B cell (primary cell): ENCODE measurements at regions of chr1 and their contacts with region 1.

Region 1: DNA sequence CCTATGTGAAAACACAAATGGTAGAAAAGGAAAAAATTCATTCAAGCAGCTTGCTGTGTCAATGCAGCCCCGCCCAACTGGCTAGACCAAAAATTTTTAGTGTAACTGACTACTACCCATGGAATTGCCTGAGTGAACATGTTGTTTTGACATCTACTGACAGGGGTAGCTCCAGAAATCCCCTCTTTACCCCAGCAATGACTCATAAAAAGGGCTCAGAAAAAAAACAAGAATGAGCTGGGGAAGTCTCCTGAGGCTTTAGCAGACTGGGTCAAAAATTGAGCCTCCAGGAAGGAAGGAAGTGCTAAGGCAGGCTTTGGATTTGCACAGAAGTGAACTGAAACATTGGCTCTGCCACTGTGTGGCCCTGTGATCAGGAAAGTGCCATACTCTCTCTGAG is 24.4 kb upstream of the FGGY start:
- DNase-seq: peak; percentile 66
- ATAC-seq: peak; percentile 91
- H3K4me3 ChIP-seq: no peak overlapping the region
- H3K4me3 Mint-ChIP-seq: peak overlapping the region; percentile 20
- H3K27ac ChIP-seq: no peak overlapping the region
- H3K27ac Mint-ChIP-seq: peak overlapping the region; percentile 88
- H3K4me1 ChIP-seq: peaks cover 13 to 21% of the 10 kb centered on the region in 2 donors
- H3K4me1 Mint-ChIP-seq: peaks cover 34% of the 10 kb centered on the region
- H3K27me3 ChIP-seq: no peaks in the 10 kb centered on the region
- H3K27me3 Mint-ChIP-seq: no peaks in the 10 kb centered on the region
- CTCF ChIP-seq: no peak

Region 2: DNA sequence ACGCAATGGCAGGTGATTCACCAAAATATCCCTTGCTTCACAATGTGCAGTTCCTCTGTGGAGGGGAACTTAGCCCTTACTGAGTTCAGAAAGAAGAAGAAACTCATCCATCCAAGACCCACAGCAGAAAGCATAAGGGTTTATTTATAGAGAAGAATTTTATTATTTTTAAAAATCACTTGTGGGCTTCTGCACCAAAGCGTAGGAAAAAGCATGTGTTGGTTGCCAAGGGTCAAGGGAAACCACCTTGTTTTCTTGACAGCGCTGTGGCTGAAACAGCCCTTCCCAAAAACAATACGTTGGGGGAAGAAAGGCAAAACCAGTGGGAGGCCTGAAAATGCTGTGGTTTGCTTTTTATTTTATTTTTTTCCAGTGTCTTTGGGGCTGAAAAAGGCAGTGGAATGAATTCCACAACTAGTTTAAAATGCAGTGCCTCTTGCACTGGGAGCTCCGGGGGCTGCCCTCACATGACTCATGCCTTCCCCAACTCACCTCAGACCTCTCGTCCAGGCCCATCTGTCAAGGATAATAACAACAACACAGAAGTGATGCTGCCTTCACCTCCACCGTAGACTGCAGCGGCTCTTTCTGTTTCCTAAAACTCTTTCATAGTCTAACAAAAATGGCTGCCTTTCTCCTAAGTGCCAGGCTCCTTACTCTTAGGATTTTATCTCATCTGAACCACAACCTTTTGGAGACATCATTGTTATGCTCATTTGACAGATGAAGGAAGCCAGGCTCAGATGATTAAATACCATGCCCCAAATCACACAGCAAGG is 264.5 kb before region 1 on chr1:
- CTCF ChIA-PET with region 1: no interaction called
- POLR2A ChIA-PET with region 1: no interaction called
- intact Hi-C with region 1: loop called (anchors 5 kb)
- DNase-seq: peak; percentile 57
- ATAC-seq: peak; percentile 68
- H3K4me3 ChIP-seq: peak overlapping the region in 3 of 5 experiments; percentile 0 to 44 (median 6)
- H3K4me3 Mint-ChIP-seq: peak overlapping the region; percentile 55
- H3K27ac ChIP-seq: peak overlapping the region; percentile 70 to 85
- H3K27ac Mint-ChIP-seq: peak overlapping the region; percentile 90
- H3K4me1 ChIP-seq: peaks cover 62 to 70% of the 10 kb centered on the region in 2 donors
- H3K4me1 Mint-ChIP-seq: peaks cover 80% of the 10 kb centered on the region
- H3K27me3 ChIP-seq: no peaks in the 10 kb centered on the region
- H3K27me3 Mint-ChIP-seq: no peaks in the 10 kb centered on the region
- CTCF ChIP-seq: no peak

Region 3: DNA sequence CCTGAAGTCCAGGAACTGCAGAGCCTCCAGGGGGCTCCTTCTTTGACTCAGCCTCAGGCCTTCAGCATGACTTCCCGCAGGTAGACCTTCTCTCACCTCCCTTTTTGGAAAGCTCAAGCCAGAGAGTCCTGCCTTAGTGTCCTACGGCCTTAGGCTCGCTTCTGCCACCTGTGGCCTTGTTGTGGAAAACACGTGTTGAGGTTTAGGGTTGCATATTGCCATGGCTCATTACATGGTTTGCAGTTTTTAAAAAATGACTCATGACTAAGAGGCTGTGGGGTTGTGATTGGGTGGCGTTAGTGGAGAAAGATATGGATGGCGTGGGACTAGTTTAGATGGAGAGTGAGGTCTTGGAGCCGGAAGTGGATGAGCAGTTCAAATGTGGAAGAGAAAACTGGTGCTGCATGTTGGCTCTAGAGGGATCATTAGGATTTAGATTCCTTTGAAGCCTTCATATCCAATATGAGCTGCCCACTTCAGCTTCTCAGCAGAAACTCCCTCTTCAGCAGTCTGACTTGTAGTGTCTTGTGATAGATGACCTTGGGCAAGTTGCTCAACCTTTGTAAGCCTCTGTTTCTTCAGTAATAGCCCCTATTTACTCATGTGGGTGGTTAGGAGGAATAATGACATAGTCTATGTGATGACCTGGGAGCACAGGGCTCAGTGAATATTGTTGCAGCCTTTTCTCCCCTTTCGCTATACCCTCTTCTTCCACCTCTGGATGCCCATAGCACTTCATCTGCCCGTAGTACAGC is 17.9 kb after region 1 on chr1:
- CTCF ChIA-PET with region 1: interaction called, 8 read pairs
- POLR2A ChIA-PET with region 1: interaction called, 3 read pairs
- intact Hi-C with region 1: loop called (anchors 1 kb)
- DNase-seq: peak; percentile 47
- ATAC-seq: peak; percentile 58
- H3K4me3 ChIP-seq: no peak overlapping the region
- H3K4me3 Mint-ChIP-seq: no peak overlapping the region
- H3K27ac ChIP-seq: no peak overlapping the region
- H3K27ac Mint-ChIP-seq: no peak overlapping the region
- H3K4me1 ChIP-seq: peaks cover 16 to 22% of the 10 kb centered on the region in 2 donors
- H3K4me1 Mint-ChIP-seq: peaks cover 32% of the 10 kb centered on the region
- H3K27me3 ChIP-seq: no peaks in the 10 kb centered on the region
- H3K27me3 Mint-ChIP-seq: no peaks in the 10 kb centered on the region
- CTCF ChIP-seq: peak; percentile 46

Region 4: DNA sequence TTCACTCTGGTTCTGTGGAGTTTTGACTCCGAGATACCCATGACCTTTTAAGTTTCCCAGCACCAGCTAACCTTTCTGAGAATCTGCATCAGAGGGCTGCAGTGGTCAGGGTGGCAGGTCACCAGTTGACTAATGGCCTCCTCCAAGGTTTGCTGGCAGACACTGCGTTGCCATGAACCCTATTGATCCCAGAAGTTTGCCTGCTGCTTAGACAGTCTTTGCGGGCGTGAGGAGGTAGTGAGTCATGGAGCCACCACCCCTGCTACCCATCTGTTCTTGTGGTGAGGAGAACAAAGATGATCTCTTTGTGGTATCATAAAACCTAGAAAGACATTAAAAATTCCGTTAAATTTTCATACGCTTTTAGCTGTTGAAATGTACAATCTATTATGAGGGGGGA is 204.8 kb after region 1 on chr1:
- CTCF ChIA-PET with region 1: no interaction called
- POLR2A ChIA-PET with region 1: no interaction called
- intact Hi-C with region 1: no loop called
- DNase-seq: no peak
- ATAC-seq: no peak
- H3K4me3 ChIP-seq: no peak overlapping the region
- H3K4me3 Mint-ChIP-seq: no peak overlapping the region
- H3K27ac ChIP-seq: no peak overlapping the region
- H3K27ac Mint-ChIP-seq: no peak overlapping the region
- H3K4me1 ChIP-seq: no peaks in the 10 kb centered on the region
- H3K4me1 Mint-ChIP-seq: peaks cover 8% of the 10 kb centered on the region
- H3K27me3 ChIP-seq: no peaks in the 10 kb centered on the region
- H3K27me3 Mint-ChIP-seq: no peaks in the 10 kb centered on the region
- CTCF ChIP-seq: no peak